SK-N-SH (cell line): ENCODE measurements at regions of chr17 and their contacts with region 1.

Region 1: DNA sequence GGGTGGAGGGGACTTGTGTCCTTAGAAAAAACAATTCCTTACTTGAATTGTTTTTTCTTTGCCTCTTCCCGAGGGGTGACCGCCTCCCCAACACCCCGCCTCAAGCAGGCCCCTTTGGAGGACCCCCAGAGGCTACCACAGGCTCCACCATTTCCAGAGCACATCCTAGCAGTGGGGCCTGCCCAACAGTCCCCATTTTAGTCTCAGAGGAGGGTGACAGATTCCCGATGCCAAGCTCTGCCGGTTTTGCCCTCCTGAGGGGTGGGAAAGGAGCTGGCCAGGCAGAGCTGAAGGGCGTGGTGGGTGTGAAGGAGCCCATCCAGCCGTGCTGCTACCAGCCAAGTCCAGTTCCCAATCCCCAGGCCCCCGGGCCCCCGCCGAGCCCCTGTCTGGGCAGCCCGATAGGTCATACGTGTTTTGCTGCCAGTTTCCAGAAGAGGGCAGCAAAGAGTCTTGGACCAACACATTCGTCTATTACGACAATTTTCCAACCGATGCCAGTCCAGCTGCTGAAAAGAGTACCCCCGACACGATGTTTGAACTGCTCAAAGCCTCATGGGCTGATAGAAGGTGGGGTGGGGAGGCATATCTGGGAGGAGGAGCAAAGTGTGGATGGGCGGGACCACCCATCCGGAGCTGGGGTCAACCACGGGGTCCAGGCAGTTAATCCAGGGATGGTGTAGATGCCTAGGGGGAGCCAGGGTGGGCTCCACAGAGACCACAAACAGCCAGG is 18.8 kb upstream of the GAA start:
- DNase-seq: peak; percentile 94
- H3K4me3 ChIP-seq: no peak overlapping the region; a peak in 1 of 4 replicates
- H3K27ac ChIP-seq: no peak overlapping the region
- H3K4me1 ChIP-seq: peaks cover 0 to 6% of the 10 kb centered on the region in 2 experiments; a peak in 1 of 4 replicates
- H3K27me3 ChIP-seq: no peaks in the 10 kb centered on the region
- CTCF ChIP-seq: peak; percentile 90
- EP300 ChIP-seq: no peak
- RAD21 ChIP-seq: peak; percentile 90

Region 2: DNA sequence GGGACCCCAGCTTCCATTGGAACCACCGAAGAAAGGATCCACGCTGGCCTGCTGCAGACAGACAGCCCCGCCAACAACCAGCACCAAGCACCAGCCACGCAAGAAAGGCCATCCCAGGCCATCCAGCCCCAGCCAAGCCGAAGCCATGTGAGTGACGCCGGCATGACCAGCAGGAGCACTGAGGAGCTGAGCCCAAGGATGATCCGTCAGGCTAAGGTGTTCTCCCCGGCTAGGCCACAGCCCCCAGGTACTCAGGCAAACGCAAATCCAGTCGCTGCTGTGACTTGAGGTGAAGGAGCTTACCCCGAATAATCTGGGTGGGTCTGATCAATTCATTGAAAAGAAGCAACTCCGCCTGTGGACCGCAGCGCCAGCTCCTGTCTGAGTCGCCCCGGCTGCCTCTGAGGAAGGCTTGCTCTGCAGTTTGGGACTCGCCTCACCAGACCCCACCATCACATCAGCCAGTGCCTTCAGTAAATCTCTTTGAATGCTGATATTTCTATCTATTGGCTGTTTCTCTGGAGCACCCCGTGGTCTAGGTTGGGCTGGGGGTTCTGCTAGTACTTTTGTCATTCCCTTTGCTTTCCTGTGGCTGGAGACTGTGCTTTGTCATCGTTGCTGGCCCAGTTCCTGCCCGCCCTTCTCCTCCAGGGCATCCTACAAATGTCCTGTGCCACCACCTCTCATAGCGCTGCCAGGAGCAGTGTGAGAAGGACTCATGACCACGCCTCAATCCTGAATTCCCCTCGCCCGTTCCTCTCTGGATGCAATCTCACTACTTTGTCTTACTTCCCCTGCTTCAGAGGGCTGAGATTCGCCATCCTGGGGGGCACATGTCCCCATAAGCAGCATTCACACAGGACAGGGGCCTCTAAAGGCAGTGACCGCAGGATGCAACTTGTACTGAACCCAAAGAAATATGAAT is 312.7 kb before region 1 on chr17:
- CTCF ChIA-PET with region 1: no interaction called
- POLR2A ChIA-PET with region 1: no interaction called
- DNase-seq: no peak
- H3K4me3 ChIP-seq: no peak overlapping the region
- H3K27ac ChIP-seq: no peak overlapping the region
- H3K4me1 ChIP-seq: no peaks in the 10 kb centered on the region; a peak in 1 of 4 replicates
- H3K27me3 ChIP-seq: peaks cover 28% of the 10 kb centered on the region
- CTCF ChIP-seq: no peak
- EP300 ChIP-seq: no peak
- RAD21 ChIP-seq: no peak

Region 3: GRCh38 chr17:80058311-80058955 is 24.1 kb before region 1 on chr17:
- CTCF ChIA-PET with region 1: interaction called, 22 read pairs
- POLR2A ChIA-PET with region 1: no interaction called
- DNase-seq: no peak
- H3K4me3 ChIP-seq: no peak overlapping the region
- H3K27ac ChIP-seq: no peak overlapping the region
- H3K4me1 ChIP-seq: no peaks in the 10 kb centered on the region
- H3K27me3 ChIP-seq: no peaks in the 10 kb centered on the region
- CTCF ChIP-seq: no peak
- EP300 ChIP-seq: no peak
- RAD21 ChIP-seq: no peak

Region 4: GRCh38 chr17:80092959-80093358 is 10.4 kb after region 1 on chr17:
- CTCF ChIA-PET with region 1: interaction called, 86 read pairs
- POLR2A ChIA-PET with region 1: no interaction called
- DNase-seq: no peak
- H3K4me3 ChIP-seq: no peak overlapping the region
- H3K27ac ChIP-seq: no peak overlapping the region
- H3K4me1 ChIP-seq: peaks cover 0 to 16% of the 10 kb centered on the region in 2 experiments; a peak in 1 of 4 replicates
- H3K27me3 ChIP-seq: no peaks in the 10 kb centered on the region
- CTCF ChIP-seq: no peak
- EP300 ChIP-seq: no peak
- RAD21 ChIP-seq: no peak

Region 5: GRCh38 chr17:80147035-80147836 is 64.7 kb after region 1 on chr17 and contains the start of gene EIF4A3:
- CTCF ChIA-PET with region 1: interaction called, 17 read pairs
- POLR2A ChIA-PET with region 1: no interaction called
- DNase-seq: peak; percentile 100
- H3K4me3 ChIP-seq: peak within 1 kb of the TSS; percentile 79 to 97
- H3K27ac ChIP-seq: peak within 1 kb of the TSS; percentile 86 to 87
- H3K4me1 ChIP-seq: peaks cover 12 to 21% of the 10 kb centered on the region in 2 experiments; a peak in 2 of 4 replicates
- H3K27me3 ChIP-seq: no peaks in the 10 kb centered on the region
- CTCF ChIP-seq: no peak; the same call in 1 of the 2 replicates
- EP300 ChIP-seq: 0 out of 4 replicates have a peak, but pooled peaks of 1 of the 2 experiments have one; percentile 4
- RAD21 ChIP-seq: peak; percentile 18; the same call in 1 of the 2 replicates
- polyA plus RNA-seq, gene EIF4A3: 173 and 335 TPM in 2 replicates

Region 6: GRCh38 chr17:80364216-80364618 is 281.6 kb after region 1 on chr17:
- CTCF ChIA-PET with region 1: interaction called, 15 read pairs
- POLR2A ChIA-PET with region 1: no interaction called
- DNase-seq: peak; percentile 83
- H3K4me3 ChIP-seq: no peak overlapping the region
- H3K27ac ChIP-seq: no peak overlapping the region
- H3K4me1 ChIP-seq: no peaks in the 10 kb centered on the region
- H3K27me3 ChIP-seq: no peaks in the 10 kb centered on the region
- CTCF ChIP-seq: peak; percentile 60
- EP300 ChIP-seq: no peak
- RAD21 ChIP-seq: peak; percentile 73